ENCODE measurements at regions of chr10 and their contacts with region 1.

Region 1: DNA sequence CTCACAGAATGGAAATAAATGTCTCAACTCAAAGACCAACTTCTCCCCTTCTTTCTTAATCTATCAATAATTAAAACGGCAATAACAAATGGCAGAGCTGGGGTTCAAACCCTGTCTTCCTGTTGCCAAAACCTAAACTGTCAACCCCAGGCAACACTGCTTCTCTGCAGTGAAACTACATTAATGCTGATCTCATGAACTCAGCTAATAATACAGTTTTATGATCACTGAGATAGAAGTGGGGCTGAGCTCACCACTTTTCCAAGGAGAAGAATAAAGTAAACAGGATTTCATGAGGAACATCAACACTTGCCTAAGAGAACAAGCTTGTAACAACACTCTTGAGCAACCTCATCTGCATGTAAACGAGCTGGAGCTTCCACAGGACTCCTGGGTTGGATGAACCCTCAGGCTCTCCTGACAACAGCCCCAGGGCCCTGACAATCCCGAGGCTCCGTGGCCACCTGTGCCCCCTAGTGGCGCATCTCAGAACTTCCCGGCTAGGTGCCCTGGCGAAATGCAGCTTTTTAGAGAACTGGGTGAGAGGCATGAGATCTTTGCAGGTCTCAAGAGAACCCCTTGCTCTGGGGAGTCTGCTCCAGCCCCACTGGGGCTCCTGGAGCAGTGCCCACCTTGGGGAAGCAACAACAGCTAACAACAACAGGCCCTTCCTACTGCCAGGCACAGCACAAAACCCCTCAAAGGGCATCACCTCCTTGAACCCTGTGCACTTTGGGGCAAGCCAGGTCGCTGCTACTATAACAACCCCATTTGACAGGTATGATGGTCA is 169.3 kb downstream of the SH3PXD2A start:
- DNase-seq: peak; percentile 83
- ATAC-seq: peak; percentile 96
- H3K4me3 ChIP-seq: no peak overlapping the region
- H3K4me3 Mint-ChIP-seq: no peak overlapping the region
- H3K27ac ChIP-seq: no peak overlapping the region
- H3K27ac Mint-ChIP-seq: peak overlapping the region; percentile 26
- H3K4me1 ChIP-seq: peaks cover 3 to 10% of the 10 kb centered on the region in 2 donors
- H3K4me1 Mint-ChIP-seq: peaks cover 21% of the 10 kb centered on the region
- H3K27me3 ChIP-seq: no peaks in the 10 kb centered on the region
- H3K27me3 Mint-ChIP-seq: no peaks in the 10 kb centered on the region
- CTCF ChIP-seq: peak; percentile 93

Region 2: GRCh38 chr10:101961591-101962498 is 1724.2 kb before region 1 on chr10:
- CTCF ChIA-PET with region 1: no interaction called
- POLR2A ChIA-PET with region 1: no interaction called
- intact Hi-C with region 1: no loop called
- DNase-seq: no peak
- ATAC-seq: no peak
- H3K4me3 ChIP-seq: no peak overlapping the region
- H3K4me3 Mint-ChIP-seq: no peak overlapping the region
- H3K27ac ChIP-seq: peak overlapping the region in 1 of 2 donors; percentile 60
- H3K27ac Mint-ChIP-seq: peak overlapping the region; percentile 65
- H3K4me1 ChIP-seq: peaks cover 35 to 51% of the 10 kb centered on the region in 2 donors
- H3K4me1 Mint-ChIP-seq: peaks cover 58% of the 10 kb centered on the region
- H3K27me3 ChIP-seq: no peaks in the 10 kb centered on the region
- H3K27me3 Mint-ChIP-seq: no peaks in the 10 kb centered on the region
- CTCF ChIP-seq: no peak

Region 3: GRCh38 chr10:103481974-103482531 is 204.0 kb before region 1 on chr10:
- CTCF ChIA-PET with region 1: interaction called, 11 read pairs
- POLR2A ChIA-PET with region 1: no interaction called
- intact Hi-C with region 1: no loop called
- DNase-seq: peak; percentile 82
- ATAC-seq: peak; percentile 81
- H3K4me3 ChIP-seq: no peak overlapping the region
- H3K4me3 Mint-ChIP-seq: no peak overlapping the region
- H3K27ac ChIP-seq: no peak overlapping the region
- H3K27ac Mint-ChIP-seq: peak overlapping the region; percentile 7
- H3K4me1 ChIP-seq: peaks cover 0 to 13% of the 10 kb centered on the region in 2 donors
- H3K4me1 Mint-ChIP-seq: peaks cover 12% of the 10 kb centered on the region
- H3K27me3 ChIP-seq: no peaks in the 10 kb centered on the region
- H3K27me3 Mint-ChIP-seq: no peaks in the 10 kb centered on the region
- CTCF ChIP-seq: peak; percentile 81

Region 4: DNA sequence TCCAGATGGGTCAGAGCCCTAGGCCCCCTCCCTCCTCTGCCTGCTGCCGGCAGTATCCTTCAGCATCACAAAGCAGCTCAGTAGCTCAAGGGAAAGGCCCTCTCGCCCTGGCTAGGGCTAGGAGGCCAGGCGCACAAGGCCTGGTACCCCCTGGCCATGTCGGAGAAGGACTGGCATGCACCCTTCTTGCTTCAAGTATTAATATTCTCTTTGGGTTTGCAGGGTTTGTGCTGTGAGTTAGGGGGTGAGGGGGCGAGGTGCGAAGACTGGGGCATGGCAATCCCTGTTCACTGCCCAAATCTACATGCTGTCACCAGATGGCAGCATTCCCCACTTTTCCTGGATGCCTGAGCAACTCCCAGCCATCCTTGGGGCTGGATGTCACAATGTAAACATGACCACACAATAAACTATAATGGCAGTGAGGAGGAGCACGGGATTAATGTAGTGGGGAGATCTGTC is 87.4 kb before region 1 on chr10:
- CTCF ChIA-PET with region 1: interaction called, 35 read pairs
- POLR2A ChIA-PET with region 1: no interaction called
- intact Hi-C with region 1: loop called (anchors 1 kb)
- DNase-seq: peak; percentile 32
- ATAC-seq: no peak
- H3K4me3 ChIP-seq: no peak overlapping the region
- H3K4me3 Mint-ChIP-seq: no peak overlapping the region
- H3K27ac ChIP-seq: no peak overlapping the region
- H3K27ac Mint-ChIP-seq: no peak overlapping the region
- H3K4me1 ChIP-seq: no peaks in the 10 kb centered on the region
- H3K4me1 Mint-ChIP-seq: no peaks in the 10 kb centered on the region
- H3K27me3 ChIP-seq: no peaks in the 10 kb centered on the region
- H3K27me3 Mint-ChIP-seq: no peaks in the 10 kb centered on the region
- CTCF ChIP-seq: peak; percentile 22

Region 5: GRCh38 chr10:103612462-103613365 is 73.4 kb before region 1 on chr10:
- CTCF ChIA-PET with region 1: interaction called, 15 read pairs
- POLR2A ChIA-PET with region 1: no interaction called
- intact Hi-C with region 1: no loop called
- DNase-seq: no peak
- ATAC-seq: no peak
- H3K4me3 ChIP-seq: no peak overlapping the region
- H3K4me3 Mint-ChIP-seq: no peak overlapping the region
- H3K27ac ChIP-seq: no peak overlapping the region
- H3K27ac Mint-ChIP-seq: no peak overlapping the region
- H3K4me1 ChIP-seq: no peaks in the 10 kb centered on the region
- H3K4me1 Mint-ChIP-seq: no peaks in the 10 kb centered on the region
- H3K27me3 ChIP-seq: no peaks in the 10 kb centered on the region
- H3K27me3 Mint-ChIP-seq: no peaks in the 10 kb centered on the region
- CTCF ChIP-seq: no peak

Region 6: DNA sequence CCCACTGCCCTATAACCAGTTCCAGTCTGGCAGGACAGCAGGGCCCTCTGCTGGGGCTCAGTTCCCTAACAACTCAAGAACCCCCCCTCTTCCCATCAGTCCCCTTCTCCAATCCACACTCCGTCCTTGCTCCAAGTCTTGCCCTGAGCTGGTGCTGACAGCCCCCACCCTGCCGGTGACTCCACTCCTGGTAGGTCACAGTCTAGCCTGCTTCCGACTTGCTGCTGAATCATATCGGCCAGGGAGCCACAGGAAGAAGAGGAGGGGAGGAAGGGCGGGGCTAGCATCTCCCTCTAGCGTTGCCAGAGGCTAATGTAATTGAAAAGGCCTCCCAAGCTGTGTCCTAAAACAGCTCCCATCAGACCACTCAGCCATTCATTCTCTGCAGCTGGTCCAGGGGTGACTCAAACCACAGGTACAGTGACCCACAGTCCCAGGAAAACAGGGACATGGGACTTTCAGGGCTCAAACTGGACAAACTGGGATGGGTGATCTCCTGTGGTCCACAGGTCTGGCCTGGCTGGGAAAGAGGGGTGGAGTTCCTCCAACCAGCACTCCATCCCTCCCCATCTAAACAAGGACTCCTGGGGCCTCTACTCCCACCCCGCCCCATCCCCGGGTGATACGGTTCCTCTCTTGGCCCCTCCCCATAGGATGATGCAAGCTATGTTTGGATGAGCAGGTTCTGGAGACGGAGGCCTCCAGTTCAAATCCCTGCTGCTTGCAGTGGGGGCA is 10.5 kb after region 1 on chr10:
- CTCF ChIA-PET with region 1: interaction called, 30 read pairs
- POLR2A ChIA-PET with region 1: no interaction called
- intact Hi-C with region 1: no loop called
- DNase-seq: peak; percentile 57
- ATAC-seq: no peak
- H3K4me3 ChIP-seq: no peak overlapping the region
- H3K4me3 Mint-ChIP-seq: peak overlapping the region; percentile 51
- H3K27ac ChIP-seq: no peak overlapping the region
- H3K27ac Mint-ChIP-seq: no peak overlapping the region
- H3K4me1 ChIP-seq: peaks cover 25 to 42% of the 10 kb centered on the region in 2 donors
- H3K4me1 Mint-ChIP-seq: peaks cover 35% of the 10 kb centered on the region
- H3K27me3 ChIP-seq: peaks cover 0 to 3% (median 1%) of the 10 kb centered on the region in 4 experiments
- H3K27me3 Mint-ChIP-seq: no peaks in the 10 kb centered on the region
- CTCF ChIP-seq: peak; percentile 25

Measured in B cell (primary cell).